Right ventricle myocardium superior (tissue), 1 donor: ENCODE measurements at regions of chr1 and their contacts with region 1.

Region 1: GRCh38 chr1:46724991-46725735 is 6.2 kb upstream of the EFCAB14 start:
- DNase-seq: peak; percentile 68
- ATAC-seq: peak; percentile 97

Region 2: DNA sequence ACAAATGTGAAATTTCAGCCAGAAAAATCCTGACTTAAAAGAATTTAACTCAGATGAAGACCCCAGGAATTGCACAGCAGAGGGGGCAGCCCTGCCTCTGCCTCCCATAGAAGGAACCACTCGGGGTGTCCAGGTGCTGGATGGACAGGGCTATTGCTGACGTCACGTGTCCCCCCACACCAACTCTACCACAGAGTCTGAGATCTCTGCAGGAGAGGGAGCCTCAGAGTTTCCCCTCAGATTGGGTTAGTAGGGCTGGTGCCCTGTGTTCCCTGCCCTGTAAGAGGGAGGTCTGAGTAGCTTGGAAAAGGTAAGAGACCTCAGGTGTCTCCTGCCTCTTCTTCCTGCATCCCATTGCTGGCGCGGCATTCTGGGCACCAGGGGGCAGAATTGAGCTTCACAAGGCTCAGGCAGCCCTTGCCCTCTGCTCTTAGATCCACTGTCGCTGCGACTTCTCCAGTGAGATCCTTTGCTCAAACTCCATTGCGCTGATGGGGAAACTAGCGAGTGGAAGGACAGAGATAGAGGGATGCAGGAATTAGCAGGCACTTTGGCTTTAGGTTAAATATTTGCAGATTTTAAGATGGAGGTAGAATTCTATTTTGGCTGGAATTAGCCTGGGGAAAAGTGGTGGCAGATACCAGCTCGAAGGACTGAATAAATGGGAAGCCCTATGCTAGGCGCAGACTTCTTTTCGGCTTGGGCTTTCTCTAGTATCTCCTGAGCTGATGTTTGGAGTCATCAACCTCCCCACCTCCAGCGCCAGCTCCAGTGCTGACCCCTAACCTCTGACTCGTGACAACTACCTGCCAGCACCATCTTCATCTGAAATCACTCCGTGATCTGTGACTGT is 278.3 kb before region 1 on chr1:
- intact Hi-C with region 1: loop called (anchors 2 kb)
- DNase-seq: peak; percentile 89
- ATAC-seq: peak; percentile 79

Region 3: DNA sequence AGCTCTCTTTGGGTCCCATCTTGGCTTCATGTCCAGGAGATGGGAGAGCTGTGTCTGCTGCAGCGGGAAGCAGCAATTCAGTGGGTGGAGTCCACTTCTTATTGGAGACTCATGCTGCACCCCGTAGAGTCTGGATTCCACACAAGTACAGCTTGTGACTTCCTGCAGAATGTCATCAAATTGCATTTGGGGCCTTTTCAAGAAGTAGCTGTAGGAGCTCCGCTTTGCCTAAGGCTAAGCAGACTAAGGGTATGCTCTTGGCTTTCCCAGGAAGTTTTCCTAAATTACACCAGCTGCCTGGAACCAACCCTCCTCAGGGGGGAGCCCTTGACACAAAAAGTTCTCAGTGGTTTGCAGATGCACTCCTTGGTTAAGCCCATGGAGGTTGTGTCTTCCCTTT is 102.8 kb before region 1 on chr1:
- intact Hi-C with region 1: loop called (anchors 10 kb)
- DNase-seq: no peak
- ATAC-seq: no peak

Region 4: GRCh38 chr1:46643368-46643775 is 81.8 kb before region 1 on chr1:
- intact Hi-C with region 1: no loop called
- DNase-seq: no peak
- ATAC-seq: peak; percentile 68

Region 5: GRCh38 chr1:46927249-46927835 is 202.2 kb after region 1 on chr1:
- intact Hi-C with region 1: no loop called
- DNase-seq: no peak
- ATAC-seq: no peak